Activated T-helper 2 cell treated with anti-CD3 and anti-CD28 coated beads, Interferon-gamma antibody, Interleukin-2, Interleukin-4, amounts not matched to agents 10 μg/mL and 5 μg/mL and 100 μg/mL, durations not matched to agents 14 hours and 24 hours and 36 hours (primary cell): ENCODE measurements at regions of chr19 and their contacts with region 1.

Region 1: GRCh38 chr19:10653715-10654492 is at the start of gene ILF3:
- DNase-seq: peak; percentile 100
- H3K4me3 Mint-ChIP-seq: peak within 1 kb of the TSS; percentile 95
- H3K27ac Mint-ChIP-seq: peak within 1 kb of the TSS; percentile 98
- H3K4me1 Mint-ChIP-seq: peaks cover 24% of the 10 kb centered on the region
- H3K27me3 Mint-ChIP-seq: no peaks in the 10 kb centered on the region
- total RNA-seq, gene ILF3: 509 and 523 TPM in 2 replicates

Region 2: DNA sequence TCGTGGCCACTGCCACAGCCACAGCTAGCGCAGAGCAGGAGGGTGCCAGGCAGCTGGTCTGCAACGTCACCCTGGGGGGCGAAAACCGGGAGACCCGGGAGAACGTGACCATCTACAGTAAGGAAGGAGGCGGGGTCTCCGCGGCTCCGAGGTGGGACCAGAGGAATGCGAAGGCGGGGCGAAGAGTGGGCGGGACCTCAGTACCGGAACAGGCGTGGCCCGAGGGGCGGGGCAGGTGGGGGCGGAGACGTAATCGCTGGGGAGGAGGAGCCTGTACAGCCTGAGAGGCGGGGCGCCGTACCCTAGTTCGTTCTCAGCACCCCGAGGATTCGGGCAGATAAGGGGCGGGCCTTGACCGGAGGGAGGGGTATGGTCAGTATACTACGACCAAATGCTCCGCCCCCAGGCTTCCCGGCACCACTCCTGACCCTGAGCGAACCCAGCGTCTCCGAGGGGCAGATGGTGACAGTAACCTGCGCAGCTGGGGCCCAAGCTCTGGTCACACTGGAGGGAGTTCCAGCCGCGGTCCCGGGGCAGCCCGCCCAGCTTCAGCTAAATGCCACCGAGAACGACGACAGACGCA is 361.6 kb before region 1 on chr19:
- intact Hi-C with region 1: loop called (anchors 10 kb)
- DNase-seq: peak; percentile 72
- H3K4me3 Mint-ChIP-seq: peak overlapping the region; percentile 79
- H3K27ac Mint-ChIP-seq: no peak overlapping the region
- H3K4me1 Mint-ChIP-seq: peaks cover 53% of the 10 kb centered on the region
- H3K27me3 Mint-ChIP-seq: peaks cover 60% of the 10 kb centered on the region

Region 3: GRCh38 chr19:10502524-10503001 is 151.3 kb before region 1 on chr19:
- intact Hi-C with region 1: loop called (anchors 10 kb)
- DNase-seq: peak; percentile 92
- H3K4me3 Mint-ChIP-seq: peak overlapping the region; percentile 93
- H3K27ac Mint-ChIP-seq: peak overlapping the region; percentile 88
- H3K4me1 Mint-ChIP-seq: peaks cover 32% of the 10 kb centered on the region
- H3K27me3 Mint-ChIP-seq: no peaks in the 10 kb centered on the region

Region 4: DNA sequence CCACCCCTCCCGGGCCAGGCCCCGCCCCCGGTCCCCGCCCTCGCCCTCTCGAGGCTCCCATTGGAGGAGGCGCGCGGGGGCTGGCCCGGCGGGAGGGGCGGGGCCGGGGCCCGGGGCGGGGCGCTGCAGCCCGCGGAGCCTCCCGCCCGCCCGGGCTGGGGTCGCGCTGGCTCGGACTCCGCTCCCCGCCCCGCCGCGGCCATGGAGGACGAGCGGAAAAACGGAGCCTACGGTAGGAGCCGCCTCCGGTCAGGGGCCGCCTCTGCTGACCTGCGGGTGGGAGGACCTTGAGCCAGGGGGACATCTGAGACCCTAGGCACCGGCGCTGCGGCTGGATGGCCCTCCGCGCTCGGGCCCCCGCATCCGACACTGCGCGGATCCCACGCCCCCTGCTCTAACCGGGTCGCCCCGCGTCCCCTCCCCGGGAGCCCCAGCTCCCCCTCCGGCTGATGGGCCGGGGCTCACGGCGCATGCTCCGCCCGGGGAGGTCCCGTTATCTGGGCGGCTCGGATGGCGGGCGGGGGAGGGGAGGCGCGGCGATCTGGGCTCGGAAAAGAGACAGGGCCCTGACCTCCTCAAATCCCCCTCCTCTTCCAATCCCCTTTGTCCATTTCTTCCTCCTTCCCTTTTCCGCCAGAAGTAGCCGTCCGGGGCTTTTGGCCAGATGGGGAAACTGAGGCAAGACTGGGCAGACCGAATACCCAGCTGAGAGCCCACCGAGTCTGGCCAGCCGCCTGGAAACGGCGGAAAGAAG is 51.4 kb before region 1 on chr19:
- intact Hi-C with region 1: loop called (anchors 5 kb)
- DNase-seq: peak; percentile 78
- H3K4me3 Mint-ChIP-seq: peak overlapping the region; percentile 97
- H3K27ac Mint-ChIP-seq: peak overlapping the region; percentile 100
- H3K4me1 Mint-ChIP-seq: peaks cover 16% of the 10 kb centered on the region
- H3K27me3 Mint-ChIP-seq: peaks cover 1% of the 10 kb centered on the region

Region 5: GRCh38 chr19:10756371-10756770 is 102.5 kb after region 1 on chr19:
- intact Hi-C with region 1: loop called (anchors 5 kb)
- DNase-seq: no peak
- H3K4me3 Mint-ChIP-seq: peak overlapping the region; percentile 26
- H3K27ac Mint-ChIP-seq: peak overlapping the region; percentile 56
- H3K4me1 Mint-ChIP-seq: peaks cover 58% of the 10 kb centered on the region
- H3K27me3 Mint-ChIP-seq: no peaks in the 10 kb centered on the region

Region 6: GRCh38 chr19:10784257-10784656 is 130.4 kb after region 1 on chr19:
- intact Hi-C with region 1: no loop called
- DNase-seq: no peak
- H3K4me3 Mint-ChIP-seq: no peak overlapping the region
- H3K27ac Mint-ChIP-seq: no peak overlapping the region
- H3K4me1 Mint-ChIP-seq: no peaks in the 10 kb centered on the region
- H3K27me3 Mint-ChIP-seq: no peaks in the 10 kb centered on the region